ENCODE measurements at regions of chr16 and their contacts with region 1.

Region 1: DNA sequence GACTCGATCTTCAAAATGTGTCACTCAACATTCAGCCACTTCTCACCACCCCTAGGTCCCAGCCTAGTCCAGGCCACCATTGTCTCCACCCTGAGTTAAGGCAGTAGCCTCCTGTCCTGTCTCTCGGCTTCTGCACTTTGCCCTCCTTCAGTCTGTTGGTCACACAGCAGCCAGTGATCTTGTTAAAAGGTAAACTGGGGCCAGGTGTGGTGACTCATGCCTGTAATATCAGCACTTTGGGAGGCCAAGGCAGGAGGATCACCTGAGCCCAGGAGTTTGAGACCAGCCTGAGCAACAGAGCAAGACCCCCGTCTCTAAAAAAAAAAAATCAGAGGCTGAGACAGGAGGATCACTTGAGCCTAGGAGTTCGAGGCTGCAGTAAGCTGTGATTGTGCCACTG is 25.8 kb downstream of the WWP2 start:
- DNase-seq: no peak
- ATAC-seq: no peak
- H3K4me3 ChIP-seq: no peak overlapping the region
- H3K4me3 Mint-ChIP-seq: no peak overlapping the region
- H3K27ac ChIP-seq: no peak overlapping the region
- H3K27ac Mint-ChIP-seq: peak overlapping the region in 1 of 9 donors; percentile 16
- H3K4me1 ChIP-seq: no peaks in the 10 kb centered on the region
- H3K4me1 Mint-ChIP-seq: peaks cover 0 to 9% (median 0%) of the 10 kb centered on the region in 7 donors
- H3K27me3 ChIP-seq: no peaks in the 10 kb centered on the region
- H3K27me3 Mint-ChIP-seq: no peaks in the 10 kb centered on the region

Region 2: GRCh38 chr16:69726296-69727060 is 61.4 kb before region 1 on chr16 and contains the start of gene NQO1:
- CTCF ChIA-PET with region 1: no interaction called
- POLR2A ChIA-PET with region 1: no interaction called
- intact Hi-C with region 1: no loop called
- DNase-seq: peak; percentile 62 to 90 (median 78)
- ATAC-seq: peak; percentile 98
- H3K4me3 ChIP-seq: peak within 1 kb of the TSS; percentile 79
- H3K4me3 Mint-ChIP-seq: peak within 1 kb of the TSS; percentile 86 to 96 (median 95)
- H3K27ac ChIP-seq: peak within 1 kb of the TSS; percentile 57
- H3K27ac Mint-ChIP-seq: peak within 1 kb of the TSS; percentile 72 to 95 (median 86)
- H3K4me1 ChIP-seq: peaks cover 10 to 18% of the 10 kb centered on the region in 2 donors
- H3K4me1 Mint-ChIP-seq: peaks cover 15 to 57% (median 27%) of the 10 kb centered on the region in 7 donors
- H3K27me3 ChIP-seq: no peaks in the 10 kb centered on the region
- H3K27me3 Mint-ChIP-seq: no peaks in the 10 kb centered on the region
- total RNA-seq, gene NQO1: 1.7 to 27.3 (median 3.2) TPM

Region 3: GRCh38 chr16:69833357-69834282 is 45.7 kb after region 1 on chr16:
- CTCF ChIA-PET with region 1: interaction called, 10 read pairs
- POLR2A ChIA-PET with region 1: no interaction called
- intact Hi-C with region 1: no loop called
- DNase-seq: no peak
- ATAC-seq: no peak
- H3K4me3 ChIP-seq: no peak overlapping the region
- H3K4me3 Mint-ChIP-seq: no peak overlapping the region
- H3K27ac ChIP-seq: no peak overlapping the region
- H3K27ac Mint-ChIP-seq: peak overlapping the region in 4 of 9 donors; percentile 26 to 79 (median 56)
- H3K4me1 ChIP-seq: no peaks in the 10 kb centered on the region
- H3K4me1 Mint-ChIP-seq: peaks cover 5 to 12% (median 9%) of the 10 kb centered on the region in 7 donors
- H3K27me3 ChIP-seq: no peaks in the 10 kb centered on the region
- H3K27me3 Mint-ChIP-seq: no peaks in the 10 kb centered on the region

Measured in naive thymus-derived CD4-positive, alpha-beta T cell (primary cell).